Psoas muscle (tissue), 8 donors: ENCODE measurements at regions of chr5 and their contacts with region 1.

Region 1: GRCh38 chr5:65113771-65114170 is 345.0 kb downstream of the CWC27 start:
- DNase-seq: no peak
- ATAC-seq: no peak
- H3K4me3 ChIP-seq: no peak overlapping the region
- H3K27ac ChIP-seq: no peak overlapping the region
- H3K4me1 ChIP-seq: no peaks in the 10 kb centered on the region
- H3K27me3 ChIP-seq: no peaks in the 10 kb centered on the region
- CTCF ChIP-seq: no peak

Region 2: GRCh38 chr5:65076251-65076869 is 37.4 kb before region 1 on chr5:
- intact Hi-C with region 1: no loop called
- DNase-seq: peak in 1 of 2 donors; percentile 18
- ATAC-seq: peak in 1 of 4 donors; percentile 42
- H3K4me3 ChIP-seq: no peak overlapping the region
- H3K27ac ChIP-seq: no peak overlapping the region
- H3K4me1 ChIP-seq: no peaks in the 10 kb centered on the region
- H3K27me3 ChIP-seq: no peaks in the 10 kb centered on the region
- CTCF ChIP-seq: no peak

Region 3: GRCh38 chr5:66764982-66765381 is 1651.2 kb after region 1 on chr5:
- intact Hi-C with region 1: loop called in 1 of 2 experiments (anchors 5 kb)
- DNase-seq: no peak
- ATAC-seq: no peak
- H3K4me3 ChIP-seq: no peak overlapping the region
- H3K27ac ChIP-seq: no peak overlapping the region
- H3K4me1 ChIP-seq: no peaks in the 10 kb centered on the region
- H3K27me3 ChIP-seq: no peaks in the 10 kb centered on the region
- CTCF ChIP-seq: no peak